Naive thymus-derived CD4-positive, alpha-beta T cell (primary cell): ENCODE measurements at regions of chr5 and their contacts with region 1.

Region 1: GRCh38 chr5:80191991-80192398 is 63.9 kb downstream of the SERINC5 start:
- DNase-seq: peak in 7 of 9 donors; percentile 61 to 72 (median 68)
- ATAC-seq: peak; percentile 85
- H3K4me3 ChIP-seq: peak overlapping the region; percentile 46
- H3K4me3 Mint-ChIP-seq: peak overlapping the region; percentile 79 to 96 (median 85)
- H3K27ac ChIP-seq: peak overlapping the region; percentile 79
- H3K27ac Mint-ChIP-seq: peak overlapping the region; percentile 87 to 99 (median 95)
- H3K4me1 ChIP-seq: peaks cover 69 to 89% of the 10 kb centered on the region in 2 donors
- H3K4me1 Mint-ChIP-seq: peaks cover 61 to 97% (median 87%) of the 10 kb centered on the region in 7 donors
- H3K27me3 ChIP-seq: no peaks in the 10 kb centered on the region
- H3K27me3 Mint-ChIP-seq: no peaks in the 10 kb centered on the region

Region 2: GRCh38 chr5:79612667-79613198 is 579.3 kb before region 1 on chr5:
- CTCF ChIA-PET with region 1: no interaction called
- POLR2A ChIA-PET with region 1: no interaction called
- intact Hi-C with region 1: loop called in 1 of 2 experiments (anchors 10 kb)
- DNase-seq: no peak
- ATAC-seq: no peak
- H3K4me3 ChIP-seq: peak overlapping the region; percentile 84
- H3K4me3 Mint-ChIP-seq: peak overlapping the region; percentile 95 to 100 (median 97)
- H3K27ac ChIP-seq: peak overlapping the region; percentile 90
- H3K27ac Mint-ChIP-seq: peak overlapping the region; percentile 91 to 99 (median 98)
- H3K4me1 ChIP-seq: peaks cover 14 to 18% of the 10 kb centered on the region in 2 donors
- H3K4me1 Mint-ChIP-seq: peaks cover 25 to 58% (median 44%) of the 10 kb centered on the region in 7 donors
- H3K27me3 ChIP-seq: no peaks in the 10 kb centered on the region
- H3K27me3 Mint-ChIP-seq: peaks cover 0 to 6% (median 2%) of the 10 kb centered on the region in 5 donors

Region 3: DNA sequence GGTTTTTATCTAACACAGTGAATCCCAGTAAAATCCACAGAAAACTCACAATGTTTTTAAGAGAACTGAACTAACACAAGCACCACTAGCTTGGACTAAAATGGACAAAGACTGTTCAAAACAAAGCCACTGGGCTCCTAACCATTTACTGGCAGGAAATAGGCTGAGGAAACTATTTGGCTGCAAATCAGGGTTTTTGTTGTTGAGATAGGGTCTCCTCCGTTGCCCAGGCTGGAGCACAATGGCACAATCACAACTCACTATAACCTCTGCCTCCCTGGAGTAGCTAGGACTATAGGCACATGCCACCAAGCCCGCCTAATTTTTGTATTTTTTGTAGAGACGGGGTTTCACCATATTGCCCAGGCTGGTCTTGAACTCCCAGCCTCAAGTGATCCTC is 57.1 kb before region 1 on chr5:
- CTCF ChIA-PET with region 1: interaction called, 5 read pairs
- POLR2A ChIA-PET with region 1: interaction called, 17 read pairs
- intact Hi-C with region 1: loop called in 1 of 2 experiments (anchors 2 kb)
- DNase-seq: no peak
- ATAC-seq: no peak
- H3K4me3 ChIP-seq: no peak overlapping the region
- H3K4me3 Mint-ChIP-seq: peak overlapping the region in 8 of 10 donors; percentile 34 to 83 (median 76)
- H3K27ac ChIP-seq: peak overlapping the region; percentile 72
- H3K27ac Mint-ChIP-seq: peak overlapping the region; percentile 83 to 96 (median 92)
- H3K4me1 ChIP-seq: peaks cover 52 to 88% of the 10 kb centered on the region in 2 donors
- H3K4me1 Mint-ChIP-seq: peaks cover 60 to 97% (median 82%) of the 10 kb centered on the region in 7 donors
- H3K27me3 ChIP-seq: no peaks in the 10 kb centered on the region
- H3K27me3 Mint-ChIP-seq: no peaks in the 10 kb centered on the region

Region 4: GRCh38 chr5:80181618-80182211 is 10.3 kb before region 1 on chr5:
- CTCF ChIA-PET with region 1: interaction called, 9 read pairs
- POLR2A ChIA-PET with region 1: interaction called, 115 read pairs
- intact Hi-C with region 1: loop called (anchors 1 kb)
- DNase-seq: peak in 7 of 9 donors; percentile 57 to 70 (median 68)
- ATAC-seq: peak; percentile 79
- H3K4me3 ChIP-seq: no peak overlapping the region
- H3K4me3 Mint-ChIP-seq: peak overlapping the region; percentile 54 to 100 (median 78)
- H3K27ac ChIP-seq: peak overlapping the region; percentile 79
- H3K27ac Mint-ChIP-seq: peak overlapping the region; percentile 74 to 99 (median 97)
- H3K4me1 ChIP-seq: peaks cover 57 to 95% of the 10 kb centered on the region in 2 donors
- H3K4me1 Mint-ChIP-seq: peaks cover 65 to 96% (median 89%) of the 10 kb centered on the region in 7 donors
- H3K27me3 ChIP-seq: no peaks in the 10 kb centered on the region
- H3K27me3 Mint-ChIP-seq: no peaks in the 10 kb centered on the region

Region 5: GRCh38 chr5:80229902-80230255 is 37.9 kb after region 1 on chr5:
- CTCF ChIA-PET with region 1: interaction called, 4 read pairs
- POLR2A ChIA-PET with region 1: interaction called, 3 read pairs
- intact Hi-C with region 1: loop called in 1 of 2 experiments (anchors 5 kb)
- DNase-seq: no peak
- ATAC-seq: no peak
- H3K4me3 ChIP-seq: no peak overlapping the region
- H3K4me3 Mint-ChIP-seq: peak overlapping the region in 8 of 10 donors; percentile 26 to 72 (median 60)
- H3K27ac ChIP-seq: peak overlapping the region; percentile 34
- H3K27ac Mint-ChIP-seq: peak overlapping the region in 7 of 9 donors; percentile 43 to 91 (median 71)
- H3K4me1 ChIP-seq: peaks cover 10 to 56% of the 10 kb centered on the region in 2 donors
- H3K4me1 Mint-ChIP-seq: peaks cover 58 to 92% (median 80%) of the 10 kb centered on the region in 7 donors
- H3K27me3 ChIP-seq: no peaks in the 10 kb centered on the region
- H3K27me3 Mint-ChIP-seq: no peaks in the 10 kb centered on the region